ENCODE measurements at regions of chr12 and their contacts with region 1.

Region 1: GRCh38 chr12:4829161-4829792 is 80.4 kb upstream of the KCNA1 start:
- DNase-seq: peak; percentile 44
- H3K4me3 Mint-ChIP-seq: peak overlapping the region; percentile 64
- H3K27ac Mint-ChIP-seq: peak overlapping the region; percentile 87
- H3K4me1 Mint-ChIP-seq: peaks cover 59% of the 10 kb centered on the region
- H3K27me3 Mint-ChIP-seq: no peaks in the 10 kb centered on the region

Region 2: DNA sequence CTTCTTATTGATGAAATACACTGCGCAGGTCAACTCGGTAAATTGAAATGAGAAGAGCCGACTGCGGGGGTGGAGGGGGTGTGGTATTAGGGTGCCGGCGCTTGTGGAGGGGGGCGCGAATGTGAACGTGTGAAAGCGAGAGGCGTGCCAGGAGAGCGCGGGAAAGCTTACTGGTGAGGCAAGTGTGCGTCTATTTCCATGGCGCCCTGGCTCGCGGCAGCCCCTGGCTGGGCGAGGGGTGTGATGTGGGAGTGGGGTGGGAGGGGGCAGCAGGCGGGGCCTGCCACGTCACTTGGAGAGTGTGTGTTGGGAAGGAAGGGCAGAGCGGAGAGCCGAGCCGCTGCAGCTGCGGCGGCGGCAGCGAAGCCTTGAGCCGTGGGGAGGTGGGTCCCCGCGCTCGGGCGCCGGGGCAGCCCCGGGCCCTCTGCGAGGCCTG is 20.2 kb before region 1 on chr12:
- CTCF ChIA-PET with region 1: no interaction called
- intact Hi-C with region 1: loop called (anchors 1 kb)
- DNase-seq: no peak
- H3K4me3 Mint-ChIP-seq: no peak overlapping the region
- H3K27ac Mint-ChIP-seq: no peak overlapping the region
- H3K4me1 Mint-ChIP-seq: peaks cover 27% of the 10 kb centered on the region
- H3K27me3 Mint-ChIP-seq: peaks cover 31% of the 10 kb centered on the region

Region 3: GRCh38 chr12:4847713-4848112 is 18.4 kb after region 1 on chr12:
- CTCF ChIA-PET with region 1: interaction called, 6 read pairs
- intact Hi-C with region 1: loop called (anchors 1 kb)
- DNase-seq: no peak
- H3K4me3 Mint-ChIP-seq: no peak overlapping the region
- H3K27ac Mint-ChIP-seq: no peak overlapping the region
- H3K4me1 Mint-ChIP-seq: peaks cover 4% of the 10 kb centered on the region
- H3K27me3 Mint-ChIP-seq: peaks cover 4% of the 10 kb centered on the region

Measured in activated naive CD4-positive, alpha-beta T cell treated with anti-CD3 and anti-CD28 coated beads for 36 hours (primary cell).